Dendritic cell treated with granulocyte-macrophage colony-stimulating factor and Interleukin-4, amounts not matched to agents 40 ng/mL and 50 ng/mL, for 4 days (primary cell): ENCODE measurements at regions of chr10 and their contacts with region 1.

Region 1: GRCh38 chr10:17787078-17787961 is 21.8 kb upstream of the MRC1 start:
- H3K4me3 Mint-ChIP-seq: peak overlapping the region; percentile 17
- H3K27ac Mint-ChIP-seq: peak overlapping the region; percentile 89
- H3K4me1 Mint-ChIP-seq: peaks cover 74% of the 10 kb centered on the region
- H3K27me3 Mint-ChIP-seq: no peaks in the 10 kb centered on the region

Region 2: GRCh38 chr10:17742918-17743317 is 44.4 kb before region 1 on chr10:
- intact Hi-C with region 1: loop called (anchors 5 kb)
- H3K4me3 Mint-ChIP-seq: peak overlapping the region; percentile 45
- H3K27ac Mint-ChIP-seq: peak overlapping the region; percentile 82
- H3K4me1 Mint-ChIP-seq: peaks cover 59% of the 10 kb centered on the region
- H3K27me3 Mint-ChIP-seq: no peaks in the 10 kb centered on the region

Region 3: DNA sequence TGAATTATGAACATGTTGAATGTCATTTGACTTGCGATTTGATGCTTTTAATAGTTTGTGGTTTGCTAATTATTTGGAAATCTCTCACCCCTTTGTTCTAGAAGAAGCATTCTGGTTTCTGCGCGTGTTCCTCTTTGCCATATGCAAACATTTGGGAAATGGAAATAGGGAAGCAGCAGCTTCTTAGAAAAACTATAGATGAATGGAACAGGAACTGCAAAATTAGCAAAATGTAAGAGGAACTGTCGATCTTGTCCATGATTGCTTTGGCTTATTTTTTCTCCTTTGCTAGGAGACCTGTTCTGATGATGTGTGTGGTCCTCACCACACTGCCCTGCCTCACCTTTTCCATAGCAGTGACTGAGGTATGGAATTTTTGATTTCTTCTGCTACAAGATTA is 16.3 kb before region 1 on chr10:
- intact Hi-C with region 1: loop called (anchors 1 kb)
- H3K4me3 Mint-ChIP-seq: peak overlapping the region; percentile 73
- H3K27ac Mint-ChIP-seq: peak overlapping the region; percentile 96
- H3K4me1 Mint-ChIP-seq: peaks cover 58% of the 10 kb centered on the region
- H3K27me3 Mint-ChIP-seq: no peaks in the 10 kb centered on the region

Region 4: GRCh38 chr10:17816199-17816598 is 28.9 kb after region 1 on chr10:
- intact Hi-C with region 1: no loop called
- H3K4me3 Mint-ChIP-seq: peak overlapping the region; percentile 64
- H3K27ac Mint-ChIP-seq: peak overlapping the region; percentile 78
- H3K4me1 Mint-ChIP-seq: peaks cover 93% of the 10 kb centered on the region
- H3K27me3 Mint-ChIP-seq: no peaks in the 10 kb centered on the region